Activated T-helper 1 cell treated with anti-CD3 and anti-CD28 coated beads, Interleukin-12 subunit alpha, Interleukin-12 subunit beta, Interleukin-2, Interleukin-4 antibody, amounts not matched to agents 30 ng/mL and 10 ng/mL and 1 ng/mL, durations not matched to agents 14 hours and 24 hours and 36 hours (primary cell): ENCODE measurements at regions of chr10 and their contacts with region 1.

Region 1: GRCh38 chr10:11782793-11783557 is 40.2 kb upstream of the PROSER2 start:
- DNase-seq: peak; percentile 8
- H3K4me3 Mint-ChIP-seq: no peak overlapping the region
- H3K27ac Mint-ChIP-seq: no peak overlapping the region
- H3K4me1 Mint-ChIP-seq: peaks cover 6% of the 10 kb centered on the region
- H3K27me3 Mint-ChIP-seq: peaks cover 10% of the 10 kb centered on the region

Region 2: GRCh38 chr10:11823122-11823988 is 40.4 kb after region 1 on chr10 and contains the start of gene PROSER2:
- intact Hi-C with region 1: loop called (anchors 5 kb)
- DNase-seq: no peak
- H3K4me3 Mint-ChIP-seq: peak within 1 kb of the TSS; percentile 69
- H3K27ac Mint-ChIP-seq: peak within 1 kb of the TSS; percentile 30
- H3K4me1 Mint-ChIP-seq: peaks cover 8% of the 10 kb centered on the region
- H3K27me3 Mint-ChIP-seq: peaks cover 50% of the 10 kb centered on the region
- total RNA-seq, gene PROSER2: 0.29 and 0.39 TPM in 2 replicates

Region 3: GRCh38 chr10:11863353-11864109 is 80.6 kb after region 1 on chr10:
- intact Hi-C with region 1: loop called (anchors 2 kb)
- DNase-seq: peak; percentile 74
- H3K4me3 Mint-ChIP-seq: peak overlapping the region; percentile 41
- H3K27ac Mint-ChIP-seq: peak overlapping the region; percentile 52
- H3K4me1 Mint-ChIP-seq: peaks cover 20% of the 10 kb centered on the region
- H3K27me3 Mint-ChIP-seq: peaks cover 70% of the 10 kb centered on the region

Region 4: DNA sequence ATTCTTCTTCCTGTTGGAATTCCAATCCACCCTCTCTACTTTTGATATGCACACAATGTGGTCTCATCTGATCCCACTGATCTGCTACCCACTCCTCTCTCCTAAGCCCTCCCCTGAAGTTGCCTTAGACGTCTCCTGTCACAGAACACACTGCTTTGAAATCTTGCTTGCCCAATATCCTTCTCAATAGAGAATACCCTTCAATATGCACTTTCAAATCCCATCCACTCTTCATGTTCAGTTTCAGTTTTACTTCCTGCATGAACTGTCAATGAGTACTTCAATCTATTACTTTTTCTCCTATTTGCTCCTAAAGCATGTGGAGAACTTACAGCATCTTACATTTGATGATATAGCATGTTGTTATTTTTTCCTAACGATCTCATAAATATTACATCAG is 166.2 kb after region 1 on chr10:
- intact Hi-C with region 1: loop called (anchors 10 kb)
- DNase-seq: no peak
- H3K4me3 Mint-ChIP-seq: no peak overlapping the region
- H3K27ac Mint-ChIP-seq: peak overlapping the region; percentile 10
- H3K4me1 Mint-ChIP-seq: peaks cover 12% of the 10 kb centered on the region
- H3K27me3 Mint-ChIP-seq: no peaks in the 10 kb centered on the region

Region 5: DNA sequence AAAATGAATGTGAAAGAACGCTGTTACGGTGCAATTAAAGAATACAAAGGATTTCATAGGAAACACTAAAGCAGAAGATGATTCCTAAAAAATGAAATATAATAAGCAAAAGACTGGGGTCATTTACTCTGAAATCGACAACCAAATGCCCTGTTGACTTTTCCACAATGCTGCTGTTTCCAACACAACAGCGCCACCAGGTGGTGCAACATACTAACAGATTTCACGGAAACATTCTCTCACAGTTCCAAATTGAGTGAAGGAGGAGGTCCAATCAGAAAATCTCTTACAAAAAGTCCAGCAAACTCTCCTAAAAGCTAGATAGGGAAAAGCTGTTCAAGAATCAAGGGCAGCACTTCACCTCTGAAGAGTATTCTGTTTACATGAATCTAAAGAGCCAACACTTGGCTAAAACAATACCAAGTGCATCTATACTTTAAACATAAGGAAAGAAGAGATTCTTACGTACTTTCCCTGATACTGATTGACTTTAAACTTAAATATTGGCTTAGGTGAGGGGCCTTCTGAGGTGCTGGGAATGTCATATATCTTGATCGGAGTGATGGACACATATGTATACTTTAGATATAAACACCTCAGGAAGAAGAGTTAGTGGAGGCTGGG is 203.7 kb after region 1 on chr10:
- intact Hi-C with region 1: loop called (anchors 1 kb)
- DNase-seq: peak; percentile 59
- H3K4me3 Mint-ChIP-seq: no peak overlapping the region
- H3K27ac Mint-ChIP-seq: no peak overlapping the region
- H3K4me1 Mint-ChIP-seq: peaks cover 8% of the 10 kb centered on the region
- H3K27me3 Mint-ChIP-seq: no peaks in the 10 kb centered on the region